ENCODE measurements at regions of chr11 and their contacts with region 1.

Region 1: DNA sequence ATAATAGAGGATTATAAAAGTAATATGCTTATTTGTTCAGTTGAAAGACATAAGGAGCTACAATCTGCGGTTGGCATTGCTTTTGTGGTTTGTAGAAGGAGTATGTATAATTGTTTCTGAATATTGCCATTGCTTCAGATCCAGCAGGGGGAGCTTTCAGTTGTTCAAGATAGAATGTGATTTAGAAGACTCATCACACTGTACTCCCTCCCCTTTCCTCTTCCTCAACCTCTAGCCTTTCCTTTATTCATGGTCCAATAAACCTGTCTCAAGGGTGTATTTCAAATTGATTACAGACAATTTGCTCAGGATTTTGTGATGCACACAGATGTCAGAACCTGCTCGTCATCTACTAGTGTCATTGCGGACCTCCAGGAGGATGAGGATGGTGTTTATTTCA is 9.8 kb downstream of the PRMT3 start:
- DNase-seq: peak in 1 of 2 experiments; percentile 43
- H3K4me3 ChIP-seq: no peak overlapping the region
- H3K4me3 Mint-ChIP-seq: no peak overlapping the region
- H3K27ac Mint-ChIP-seq: no peak overlapping the region
- H3K4me1 ChIP-seq: no peaks in the 10 kb centered on the region
- H3K4me1 Mint-ChIP-seq: no peaks in the 10 kb centered on the region
- H3K27me3 ChIP-seq: no peaks in the 10 kb centered on the region
- H3K27me3 Mint-ChIP-seq: no peaks in the 10 kb centered on the region
- CTCF ChIP-seq: peak; percentile 59 to 70

Region 2: DNA sequence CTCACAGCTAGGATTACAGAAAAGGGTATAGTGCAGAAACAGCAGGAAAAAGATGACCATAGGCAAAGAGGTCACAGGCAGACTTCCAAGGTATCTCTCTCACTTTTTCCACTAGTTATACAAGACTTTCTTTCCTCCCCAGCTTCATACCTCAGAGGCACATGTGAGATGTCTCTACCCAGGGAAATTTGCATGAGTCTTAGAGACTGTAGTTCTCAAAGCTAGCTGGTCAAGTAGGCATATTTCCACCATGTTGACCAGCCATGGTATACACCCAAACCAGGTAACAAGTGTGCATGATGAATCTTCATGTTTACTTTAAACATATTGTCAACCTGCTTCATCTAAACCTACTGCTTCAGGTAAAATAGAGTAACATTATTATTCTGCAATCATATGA is 18.2 kb after region 1 on chr11:
- CTCF ChIA-PET with region 1: no interaction called
- POLR2A ChIA-PET with region 1: no interaction called
- intact Hi-C with region 1: no loop called
- DNase-seq: no peak
- H3K4me3 ChIP-seq: no peak overlapping the region
- H3K4me3 Mint-ChIP-seq: no peak overlapping the region
- H3K27ac Mint-ChIP-seq: no peak overlapping the region
- H3K4me1 ChIP-seq: no peaks in the 10 kb centered on the region
- H3K4me1 Mint-ChIP-seq: no peaks in the 10 kb centered on the region
- H3K27me3 ChIP-seq: no peaks in the 10 kb centered on the region
- H3K27me3 Mint-ChIP-seq: no peaks in the 10 kb centered on the region
- CTCF ChIP-seq: no peak

Region 3: GRCh38 chr11:20443596-20443995 is 46.3 kb after region 1 on chr11:
- CTCF ChIA-PET with region 1: interaction called, 6 read pairs
- POLR2A ChIA-PET with region 1: no interaction called
- intact Hi-C with region 1: loop called (anchors 2 kb)
- DNase-seq: peak in 1 of 2 experiments; percentile 11
- H3K4me3 ChIP-seq: no peak overlapping the region
- H3K4me3 Mint-ChIP-seq: no peak overlapping the region
- H3K27ac Mint-ChIP-seq: no peak overlapping the region
- H3K4me1 ChIP-seq: no peaks in the 10 kb centered on the region
- H3K4me1 Mint-ChIP-seq: no peaks in the 10 kb centered on the region
- H3K27me3 ChIP-seq: no peaks in the 10 kb centered on the region
- H3K27me3 Mint-ChIP-seq: no peaks in the 10 kb centered on the region
- CTCF ChIP-seq: peak; percentile 25 to 50

Region 4: GRCh38 chr11:20566591-20567434 is 169.5 kb after region 1 on chr11:
- CTCF ChIA-PET with region 1: no interaction called
- POLR2A ChIA-PET with region 1: no interaction called
- intact Hi-C with region 1: no loop called
- DNase-seq: no peak
- H3K4me3 ChIP-seq: no peak overlapping the region
- H3K4me3 Mint-ChIP-seq: no peak overlapping the region
- H3K27ac Mint-ChIP-seq: no peak overlapping the region
- H3K4me1 ChIP-seq: no peaks in the 10 kb centered on the region
- H3K4me1 Mint-ChIP-seq: no peaks in the 10 kb centered on the region
- H3K27me3 ChIP-seq: no peaks in the 10 kb centered on the region
- H3K27me3 Mint-ChIP-seq: peaks cover 12% of the 10 kb centered on the region
- CTCF ChIP-seq: no peak

Measured in Caco-2 (cell line).